ENCODE measurements at regions of chr3 and their contacts with region 1.

Region 1: DNA sequence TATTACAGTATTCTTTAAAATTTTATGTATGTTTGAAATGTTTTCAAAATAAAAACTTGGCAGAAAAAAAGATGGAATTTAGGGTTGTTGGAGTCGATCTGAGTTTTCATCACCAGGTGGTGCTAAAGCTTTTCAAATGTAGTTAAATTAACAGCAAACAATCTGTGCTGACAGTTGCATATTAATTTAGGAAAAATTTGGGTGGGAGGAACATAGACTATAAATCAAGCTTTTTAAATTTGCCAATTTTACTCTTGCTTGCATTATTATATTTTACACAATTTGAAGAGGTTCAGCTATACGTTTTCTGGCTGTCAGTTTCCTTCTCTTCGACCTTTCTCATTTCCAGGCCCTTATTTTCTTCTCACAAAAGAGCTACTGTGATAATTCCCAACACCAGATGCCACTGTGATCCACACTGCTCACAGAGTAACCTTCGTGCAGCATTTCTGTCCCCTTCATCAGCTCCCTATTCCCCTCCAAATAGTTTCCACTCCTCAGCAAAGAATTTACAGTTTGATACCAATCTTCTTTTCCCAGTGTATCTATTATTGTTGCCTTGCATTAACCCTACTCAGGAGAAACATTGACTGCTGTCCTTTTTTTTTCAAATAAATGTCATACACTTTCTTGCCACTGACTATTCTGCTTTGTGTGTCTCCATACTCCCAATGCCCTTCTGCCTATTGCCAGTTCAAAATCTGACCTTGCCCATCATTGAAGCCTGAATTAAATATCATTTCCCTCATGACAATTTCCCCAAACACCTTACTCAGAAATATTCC is 53.4 kb upstream of the EIF5A2 start:
- DNase-seq: peak; percentile 76
- ATAC-seq: peak; percentile 91
- H3K4me3 ChIP-seq: peak overlapping the region in 1 of 3 experiments; percentile 20; a peak in 1 of 6 replicates
- H3K27ac ChIP-seq: peak overlapping the region; percentile 46
- H3K4me1 ChIP-seq: peaks cover 51% of the 10 kb centered on the region
- H3K27me3 ChIP-seq: no peaks in the 10 kb centered on the region
- CTCF ChIP-seq: peak; percentile 80
- EP300 ChIP-seq: no peak
- POLR2A ChIP-seq: no peak
- RAD21 ChIP-seq: peak; percentile 82; the same call in 1 of the 2 replicates

Region 2: DNA sequence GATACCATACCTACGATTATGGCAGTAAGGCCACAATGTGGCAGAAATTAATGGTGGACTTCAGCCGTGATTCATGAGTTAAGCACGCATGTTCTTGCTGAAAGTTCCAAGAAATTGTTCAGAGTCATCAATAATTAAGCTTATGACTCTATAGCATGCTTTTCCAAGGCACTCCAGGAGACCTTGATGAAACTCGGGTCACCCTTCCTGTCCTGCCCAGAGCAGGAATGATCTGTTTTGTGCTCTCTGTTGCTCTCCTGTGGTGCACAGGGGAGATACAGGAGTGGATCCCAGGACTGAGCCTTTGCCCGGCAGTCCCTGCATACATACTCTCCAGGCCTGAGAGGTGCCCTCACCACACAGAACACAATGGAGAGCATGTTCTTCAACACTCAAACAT is 206.3 kb after region 1 on chr3:
- CTCF ChIA-PET with region 1: interaction called, 18 read pairs
- POLR2A ChIA-PET with region 1: interaction called, 3 read pairs
- in situ Hi-C with region 1: loop called (anchors 5 kb)
- intact Hi-C with region 1: loop called (anchors 5 kb)
- DNase-seq: peak; percentile 76
- ATAC-seq: peak; percentile 99
- H3K4me3 ChIP-seq: no peak overlapping the region
- H3K27ac ChIP-seq: no peak overlapping the region
- H3K4me1 ChIP-seq: peaks cover 43% of the 10 kb centered on the region
- H3K27me3 ChIP-seq: no peaks in the 10 kb centered on the region; a peak in 1 of 5 replicates
- CTCF ChIP-seq: peak; percentile 85
- EP300 ChIP-seq: no peak
- POLR2A ChIP-seq: no peak
- RAD21 ChIP-seq: peak; percentile 74

Region 3: DNA sequence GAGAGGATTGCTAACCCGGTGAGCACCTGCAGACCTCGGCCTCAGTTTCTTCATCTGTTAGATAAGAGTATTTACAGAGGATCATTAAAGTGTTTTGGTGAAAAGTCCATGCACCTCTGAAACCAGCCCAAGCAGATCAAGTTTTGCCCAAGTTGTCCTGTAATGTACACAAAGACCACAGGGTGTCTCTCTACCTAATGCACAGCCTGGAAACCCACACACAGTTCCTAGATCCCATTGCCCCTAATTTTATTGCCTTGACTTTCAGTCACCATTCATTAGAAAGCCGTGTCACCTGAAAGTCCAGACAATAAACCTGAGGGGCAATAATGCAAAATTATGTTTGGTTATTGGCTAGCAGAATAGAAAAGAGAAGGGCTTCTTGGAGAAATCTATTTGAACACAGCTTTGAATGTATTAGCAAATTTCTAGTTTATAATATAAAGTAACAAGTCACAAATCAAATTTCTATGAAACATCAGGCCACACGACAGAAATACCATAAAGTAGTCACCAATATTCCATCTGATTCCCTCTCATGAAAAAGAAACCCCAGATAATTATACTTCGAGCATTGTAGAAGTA is 226.0 kb after region 1 on chr3:
- CTCF ChIA-PET with region 1: interaction called, 16 read pairs
- POLR2A ChIA-PET with region 1: no interaction called
- in situ Hi-C with region 1: no loop called
- intact Hi-C with region 1: loop called (anchors 1 kb)
- DNase-seq: peak; percentile 47
- ATAC-seq: peak; percentile 90
- H3K4me3 ChIP-seq: no peak overlapping the region
- H3K27ac ChIP-seq: no peak overlapping the region
- H3K4me1 ChIP-seq: peaks cover 21% of the 10 kb centered on the region
- H3K27me3 ChIP-seq: no peaks in the 10 kb centered on the region
- CTCF ChIP-seq: peak; percentile 78
- EP300 ChIP-seq: no peak
- POLR2A ChIP-seq: no peak
- RAD21 ChIP-seq: 0 out of 2 replicates have a peak, but pooled peaks have one; percentile 17

Region 4: DNA sequence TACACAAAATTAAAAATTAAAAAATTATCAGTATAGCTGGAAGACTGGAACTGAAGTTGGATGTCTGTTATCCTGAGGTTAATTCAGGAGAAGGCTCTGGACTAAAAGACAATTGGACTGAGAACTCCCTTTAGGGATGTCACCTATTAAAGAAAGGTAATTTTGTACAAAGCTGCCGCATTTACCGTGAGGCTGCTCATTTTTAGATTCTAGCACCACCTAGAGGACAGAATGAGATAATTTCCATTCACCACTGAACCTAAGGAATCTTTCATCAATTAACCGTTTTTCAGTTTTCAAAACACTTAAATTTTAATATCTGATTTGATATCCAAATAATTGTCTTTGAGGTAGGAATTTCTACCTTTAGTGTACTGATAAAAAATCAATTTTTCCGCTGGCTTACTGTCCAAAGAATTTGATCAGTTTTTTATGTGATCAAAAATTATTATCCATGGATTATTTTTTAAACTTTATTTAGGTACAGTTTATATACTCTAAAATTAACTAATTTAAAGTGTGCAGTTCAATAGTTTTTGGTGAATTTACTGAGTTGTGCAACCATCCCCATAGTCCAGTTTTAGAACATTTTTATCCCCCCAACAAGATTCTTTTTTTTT is 605.1 kb after region 1 on chr3:
- CTCF ChIA-PET with region 1: interaction called, 33 read pairs
- POLR2A ChIA-PET with region 1: interaction called, 3 read pairs
- in situ Hi-C with region 1: loop called (anchors 5 kb)
- intact Hi-C with region 1: loop called (anchors 1 kb)
- DNase-seq: peak; percentile 41
- ATAC-seq: peak; percentile 53; the same call in 2 of the 3 replicates
- H3K4me3 ChIP-seq: no peak overlapping the region
- H3K27ac ChIP-seq: no peak overlapping the region
- H3K4me1 ChIP-seq: peaks cover 15% of the 10 kb centered on the region
- H3K27me3 ChIP-seq: no peaks in the 10 kb centered on the region
- CTCF ChIP-seq: peak; percentile 75
- EP300 ChIP-seq: no peak
- POLR2A ChIP-seq: no peak
- RAD21 ChIP-seq: peak; percentile 68